ENCODE measurements at regions of chr2 and their contacts with region 1.

Region 1: DNA sequence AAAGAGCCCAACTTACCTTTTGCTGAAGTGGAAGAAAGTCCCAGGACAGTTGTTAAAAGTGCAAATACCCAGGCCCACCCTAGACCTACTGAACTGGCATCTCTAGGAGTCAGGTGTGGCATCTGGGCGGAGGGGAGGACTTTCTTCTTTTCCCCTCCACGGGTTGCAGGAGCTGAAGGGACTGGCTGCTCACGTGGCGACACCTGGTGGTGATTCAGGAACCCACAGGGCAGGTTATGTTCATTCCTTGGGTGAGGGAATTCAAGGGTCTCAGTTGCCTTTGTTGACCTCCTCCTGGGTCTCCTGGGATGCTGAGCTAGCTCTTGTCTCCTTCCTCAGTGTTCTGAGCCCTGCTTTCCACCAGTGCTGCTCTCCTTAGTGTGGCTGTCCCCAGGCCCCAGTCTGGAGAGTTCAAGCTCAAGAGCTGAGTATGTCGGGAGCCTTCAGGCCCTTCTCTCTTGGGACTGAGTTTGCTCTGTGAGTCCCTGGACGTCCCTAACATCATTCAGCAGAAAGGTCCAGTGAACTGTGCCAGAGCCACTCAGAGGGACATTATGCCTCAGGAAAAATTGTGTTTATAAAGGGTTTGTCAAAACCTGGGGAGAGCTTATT is 56.9 kb downstream of the DYSF start:
- DNase-seq: peak; percentile 63 to 81
- H3K4me3 ChIP-seq: no peak overlapping the region
- H3K27ac ChIP-seq: no peak overlapping the region
- H3K4me1 ChIP-seq: no peaks in the 10 kb centered on the region
- H3K27me3 ChIP-seq: no peaks in the 10 kb centered on the region
- CTCF ChIP-seq: peak; percentile 89 to 92

Region 2: DNA sequence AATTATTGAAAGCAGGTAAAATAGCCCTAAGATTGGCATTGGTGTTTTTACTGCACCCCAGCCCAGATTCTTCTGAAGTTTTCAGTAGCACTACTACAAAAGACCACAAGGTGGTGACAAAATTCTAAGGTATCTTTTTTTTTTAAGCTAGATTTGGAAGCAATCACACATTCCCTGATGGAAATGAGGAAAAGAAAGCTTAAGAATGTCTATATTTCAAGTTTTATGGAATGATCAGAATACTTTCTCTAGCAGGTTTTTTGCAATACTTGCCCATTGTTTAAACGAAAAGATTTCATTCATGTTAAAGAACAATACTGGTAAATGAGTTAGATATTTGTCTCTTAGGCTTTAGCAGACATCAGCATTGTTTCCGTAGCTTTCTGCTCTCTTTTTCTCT is 210.8 kb before region 1 on chr2:
- intact Hi-C with region 1: loop called (anchors 5 kb)
- DNase-seq: no peak
- H3K4me3 ChIP-seq: no peak overlapping the region
- H3K27ac ChIP-seq: no peak overlapping the region
- H3K4me1 ChIP-seq: no peaks in the 10 kb centered on the region
- H3K27me3 ChIP-seq: no peaks in the 10 kb centered on the region
- CTCF ChIP-seq: peak; percentile 71 to 77

Region 3: GRCh38 chr2:71417300-71418202 is 92.8 kb before region 1 on chr2:
- intact Hi-C with region 1: no loop called
- DNase-seq: no peak
- H3K4me3 ChIP-seq: no peak overlapping the region
- H3K27ac ChIP-seq: no peak overlapping the region
- H3K4me1 ChIP-seq: peaks cover 0 to 5% (median 0%) of the 10 kb centered on the region in 4 donors
- H3K27me3 ChIP-seq: no peaks in the 10 kb centered on the region
- CTCF ChIP-seq: no peak

Region 4: GRCh38 chr2:71460595-71461303 is 49.6 kb before region 1 on chr2:
- intact Hi-C with region 1: loop called (anchors 2 kb)
- DNase-seq: no peak
- H3K4me3 ChIP-seq: no peak overlapping the region
- H3K27ac ChIP-seq: no peak overlapping the region
- H3K4me1 ChIP-seq: peaks cover 0 to 40% (median 25%) of the 10 kb centered on the region in 4 donors
- H3K27me3 ChIP-seq: no peaks in the 10 kb centered on the region
- CTCF ChIP-seq: no peak

Region 5: GRCh38 chr2:73376681-73377080 is 1866.4 kb after region 1 on chr2:
- intact Hi-C with region 1: loop called (anchors 5 kb)
- DNase-seq: no peak
- H3K4me3 ChIP-seq: no peak overlapping the region
- H3K27ac ChIP-seq: no peak overlapping the region
- H3K4me1 ChIP-seq: no peaks in the 10 kb centered on the region
- H3K27me3 ChIP-seq: peaks cover 0 to 22% of the 10 kb centered on the region in 2 donors
- CTCF ChIP-seq: no peak